CD4-positive, alpha-beta T cell (primary cell): ENCODE measurements at regions of chr2 and their contacts with region 1.

Region 1: DNA sequence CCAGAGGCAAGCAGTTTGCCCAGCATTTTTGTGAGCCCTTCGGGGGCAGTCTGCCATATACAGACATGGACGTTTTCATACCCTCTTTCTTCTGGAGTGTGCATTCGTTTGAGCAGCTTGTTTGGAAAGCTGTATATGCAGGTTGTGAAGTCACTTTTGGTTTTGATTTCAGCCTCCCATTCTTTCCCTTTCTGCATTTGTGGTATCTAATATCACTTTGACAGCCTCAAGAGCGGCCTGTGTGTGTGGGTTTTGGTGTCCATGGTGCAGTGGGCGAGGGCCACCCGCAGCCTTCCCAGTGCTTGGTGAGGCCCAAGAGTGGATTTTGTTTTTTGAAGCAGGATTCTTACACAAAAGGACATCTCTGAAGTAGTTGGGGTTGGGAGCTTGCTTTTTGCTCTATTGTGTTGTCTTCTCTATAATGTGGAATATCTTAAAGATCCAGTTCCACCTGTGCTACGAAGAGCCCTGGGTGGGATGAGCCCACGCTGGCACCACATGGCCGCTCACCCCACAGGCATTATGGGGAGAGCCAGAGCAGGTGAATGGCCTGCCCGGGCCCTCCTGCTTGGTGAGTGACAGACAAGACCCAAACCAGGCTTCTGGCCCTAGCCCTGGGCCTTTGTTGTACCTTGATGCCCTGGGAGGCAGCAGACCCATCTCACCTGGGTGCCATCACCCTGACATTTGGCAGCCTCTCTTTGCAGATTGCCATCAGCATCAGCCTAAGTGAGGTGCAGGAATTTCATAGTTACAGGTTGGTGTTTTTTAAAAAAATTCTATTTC is 29.5 kb downstream of the INPP4A start:
- DNase-seq: peak in 4 of 14 experiments; percentile 32 to 69 (median 48)
- ATAC-seq: peak; percentile 41
- H3K4me3 ChIP-seq: peak overlapping the region; percentile 34
- H3K4me3 Mint-ChIP-seq: peak overlapping the region; percentile 80
- H3K27ac ChIP-seq: peak overlapping the region; percentile 57 to 66
- H3K27ac Mint-ChIP-seq: peak overlapping the region; percentile 72
- H3K4me1 ChIP-seq: peaks cover 99% of the 10 kb centered on the region
- H3K4me1 Mint-ChIP-seq: peaks cover 95% of the 10 kb centered on the region
- H3K27me3 ChIP-seq: no peaks in the 10 kb centered on the region
- H3K27me3 Mint-ChIP-seq: no peaks in the 10 kb centered on the region
- CTCF ChIP-seq: no peak

Region 2: GRCh38 chr2:98419977-98420725 is 54.0 kb before region 1 on chr2:
- CTCF ChIA-PET with region 1: no interaction called
- POLR2A ChIA-PET with region 1: no interaction called
- intact Hi-C with region 1: no loop called
- DNase-seq: no peak
- ATAC-seq: no peak
- H3K4me3 ChIP-seq: no peak overlapping the region
- H3K4me3 Mint-ChIP-seq: no peak overlapping the region
- H3K27ac ChIP-seq: no peak overlapping the region
- H3K27ac Mint-ChIP-seq: no peak overlapping the region
- H3K4me1 ChIP-seq: peaks cover 4% of the 10 kb centered on the region
- H3K4me1 Mint-ChIP-seq: no peaks in the 10 kb centered on the region
- H3K27me3 ChIP-seq: no peaks in the 10 kb centered on the region
- H3K27me3 Mint-ChIP-seq: no peaks in the 10 kb centered on the region
- CTCF ChIP-seq: no peak

Region 3: DNA sequence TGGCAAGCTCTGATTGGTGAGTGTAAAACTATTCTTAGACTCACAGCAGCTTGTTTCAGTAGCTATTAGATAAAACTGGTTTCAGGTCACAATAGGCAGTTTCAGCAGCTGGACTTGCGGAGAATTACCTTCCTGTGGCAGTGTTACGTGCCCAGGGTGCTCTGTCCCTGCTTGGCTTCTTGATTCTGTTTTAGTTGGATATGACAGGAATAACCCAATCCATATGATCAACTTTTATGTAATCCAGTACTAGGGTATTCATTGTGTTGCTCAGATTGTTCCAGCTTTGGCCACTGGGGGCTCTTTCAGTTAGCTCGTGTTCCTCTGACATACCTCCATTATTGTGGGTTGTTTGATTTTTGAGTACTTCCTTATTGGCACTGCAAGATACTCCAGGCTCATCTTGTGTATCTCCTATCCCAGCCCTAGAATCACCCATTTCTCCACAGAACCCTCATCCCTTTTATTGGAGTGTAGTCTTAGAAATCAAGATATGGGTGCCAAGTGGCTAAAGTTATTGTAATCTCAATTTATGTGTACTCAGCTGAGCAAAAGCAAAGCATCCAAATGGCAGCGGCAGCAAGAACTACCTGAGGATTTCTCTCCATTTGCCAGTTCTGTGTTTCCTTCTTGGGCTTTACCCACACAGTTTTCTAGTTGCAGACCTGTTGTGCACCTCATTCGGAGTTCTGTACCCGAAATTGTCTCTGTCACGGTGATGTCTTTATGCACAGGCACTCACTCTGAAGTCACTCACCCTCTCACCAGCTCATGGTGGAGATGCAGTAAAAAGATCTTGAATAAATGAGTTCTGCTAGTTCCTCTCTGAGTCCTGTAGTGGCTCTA is 13.8 kb after region 1 on chr2:
- CTCF ChIA-PET with region 1: interaction called, 9 read pairs
- POLR2A ChIA-PET with region 1: interaction called, 6 read pairs
- intact Hi-C with region 1: loop called in 1 of 2 experiments (anchors 2 kb)
- DNase-seq: peak in 12 of 14 experiments; percentile 37 to 80 (median 50)
- ATAC-seq: peak; percentile 86
- H3K4me3 ChIP-seq: no peak overlapping the region
- H3K4me3 Mint-ChIP-seq: peak overlapping the region; percentile 54
- H3K27ac ChIP-seq: no peak overlapping the region
- H3K27ac Mint-ChIP-seq: peak overlapping the region; percentile 57
- H3K4me1 ChIP-seq: peaks cover 79% of the 10 kb centered on the region
- H3K4me1 Mint-ChIP-seq: peaks cover 100% of the 10 kb centered on the region
- H3K27me3 ChIP-seq: no peaks in the 10 kb centered on the region
- H3K27me3 Mint-ChIP-seq: no peaks in the 10 kb centered on the region
- CTCF ChIP-seq: peak; percentile 66

Region 4: DNA sequence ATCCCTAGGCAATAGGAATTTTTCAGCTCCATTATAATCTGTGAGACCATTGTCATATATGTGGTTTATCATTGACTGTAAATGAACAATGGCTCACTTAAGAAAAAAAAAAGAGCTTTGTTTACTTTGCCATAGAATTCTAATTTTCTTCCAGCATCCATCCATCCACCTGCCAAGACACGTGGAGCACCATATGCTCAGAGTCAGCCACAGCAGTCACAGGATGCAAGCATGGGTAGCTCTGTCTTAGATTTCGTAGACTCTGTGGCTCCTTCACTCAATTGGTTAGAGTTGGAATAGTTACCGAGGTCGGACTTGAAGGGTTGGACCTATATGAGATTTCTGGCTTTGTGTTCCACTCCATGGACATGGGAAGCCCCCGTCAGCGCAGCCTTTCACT is 58.6 kb after region 1 on chr2:
- CTCF ChIA-PET with region 1: no interaction called
- POLR2A ChIA-PET with region 1: no interaction called
- intact Hi-C with region 1: no loop called
- DNase-seq: no peak
- ATAC-seq: no peak
- H3K4me3 ChIP-seq: no peak overlapping the region
- H3K4me3 Mint-ChIP-seq: no peak overlapping the region
- H3K27ac ChIP-seq: no peak overlapping the region
- H3K27ac Mint-ChIP-seq: peak overlapping the region; percentile 83
- H3K4me1 ChIP-seq: no peaks in the 10 kb centered on the region
- H3K4me1 Mint-ChIP-seq: peaks cover 19% of the 10 kb centered on the region
- H3K27me3 ChIP-seq: no peaks in the 10 kb centered on the region
- H3K27me3 Mint-ChIP-seq: no peaks in the 10 kb centered on the region
- CTCF ChIP-seq: no peak